PC-9 (cell line): ENCODE measurements at regions of chr2 and their contacts with region 1.

Region 1: DNA sequence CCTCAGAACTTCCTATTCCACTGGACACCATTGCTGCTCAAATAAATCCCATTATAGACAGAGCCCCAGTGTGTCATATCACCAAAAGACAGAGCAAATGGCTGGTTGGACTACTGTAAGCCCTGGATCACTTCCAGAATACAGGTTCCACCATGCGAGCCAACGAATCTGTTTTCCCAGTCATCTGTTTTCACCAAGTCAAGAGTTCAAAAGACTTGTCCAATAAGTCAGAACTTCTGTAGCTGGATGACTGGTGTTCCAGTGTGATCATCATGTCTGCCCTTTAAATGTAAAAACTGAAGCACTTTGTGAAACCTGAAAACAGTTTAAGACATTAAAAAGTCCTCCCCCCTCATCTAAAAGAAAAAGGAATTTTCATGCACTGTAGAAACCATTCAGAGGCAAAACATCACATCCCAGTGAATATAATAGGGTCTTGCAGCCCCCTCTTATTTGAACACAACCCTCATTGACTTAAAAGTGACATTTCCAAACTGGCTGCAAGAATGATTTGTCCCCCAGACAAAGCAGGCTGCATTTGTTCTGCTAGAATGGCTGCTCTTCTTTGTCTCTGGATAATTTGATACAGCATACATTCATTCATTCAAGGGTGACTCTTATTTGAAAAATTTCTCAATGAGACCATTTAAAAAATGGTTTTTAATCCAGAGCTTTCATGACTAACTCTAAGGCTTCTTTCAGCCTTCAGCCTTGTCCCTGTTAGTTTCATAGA is 64.6 kb upstream of the TANC1 start:
- DNase-seq: no peak
- H3K4me3 ChIP-seq: no peak overlapping the region
- H3K27ac ChIP-seq: no peak overlapping the region
- H3K4me1 ChIP-seq: no peaks in the 10 kb centered on the region
- H3K27me3 ChIP-seq: no peaks in the 10 kb centered on the region
- CTCF ChIP-seq: no peak

Region 2: GRCh38 chr2:159035790-159036411 is 132.0 kb after region 1 on chr2:
- CTCF ChIA-PET with region 1: no interaction called
- POLR2A ChIA-PET with region 1: no interaction called
- intact Hi-C with region 1: loop called (anchors 5 kb)
- DNase-seq: peak; percentile 43 to 62
- H3K4me3 ChIP-seq: no peak overlapping the region
- H3K27ac ChIP-seq: peak overlapping the region; percentile 19; the same call in 1 of the 2 replicates
- H3K4me1 ChIP-seq: peaks cover 14% of the 10 kb centered on the region
- H3K27me3 ChIP-seq: no peaks in the 10 kb centered on the region
- CTCF ChIP-seq: peak; percentile 57